CD4-positive, alpha-beta memory T cell (primary cell): ENCODE measurements at regions of chr1 and their contacts with region 1.

Region 1: GRCh38 chr1:110872745-110873720 is at the start of gene CD53:
- DNase-seq: peak; percentile 70 to 82 (median 73)
- H3K4me3 ChIP-seq: peak within 1 kb of the TSS; percentile 79 to 92
- H3K4me3 Mint-ChIP-seq: peak within 1 kb of the TSS; percentile 94 to 100 (median 98)
- H3K27ac ChIP-seq: peak within 1 kb of the TSS; percentile 88
- H3K27ac Mint-ChIP-seq: peak within 1 kb of the TSS; percentile 93 to 99 (median 98)
- H3K4me1 ChIP-seq: peaks cover 54% of the 10 kb centered on the region
- H3K4me1 Mint-ChIP-seq: peaks cover 43 to 79% (median 52%) of the 10 kb centered on the region in 4 donors
- H3K27me3 ChIP-seq: no peaks in the 10 kb centered on the region
- H3K27me3 Mint-ChIP-seq: no peaks in the 10 kb centered on the region
- total RNA-seq, gene CD53: 337 to 338 TPM

Region 2: GRCh38 chr1:110209715-110210603 is 663.1 kb before region 1 on chr1 and contains the start of gene KCNC4:
- CTCF ChIA-PET with region 1: no interaction called
- POLR2A ChIA-PET with region 1: no interaction called
- intact Hi-C with region 1: loop called (anchors 5 kb)
- DNase-seq: peak; percentile 91 to 95 (median 94)
- H3K4me3 ChIP-seq: peak within 1 kb of the TSS; percentile 36 to 68
- H3K4me3 Mint-ChIP-seq: peak within 1 kb of the TSS; percentile 87 to 95 (median 89)
- H3K27ac ChIP-seq: peak within 1 kb of the TSS; percentile 81
- H3K27ac Mint-ChIP-seq: peak within 1 kb of the TSS; percentile 89 to 98 (median 97)
- H3K4me1 ChIP-seq: peaks cover 44% of the 10 kb centered on the region
- H3K4me1 Mint-ChIP-seq: peaks cover 32 to 64% (median 45%) of the 10 kb centered on the region in 4 donors
- H3K27me3 ChIP-seq: no peaks in the 10 kb centered on the region
- H3K27me3 Mint-ChIP-seq: no peaks in the 10 kb centered on the region
- total RNA-seq, gene KCNC4: 11.9 to 13.4 TPM

Region 3: GRCh38 chr1:110674337-110675059 is 198.5 kb before region 1 on chr1 and contains the start of gene KCNA3:
- CTCF ChIA-PET with region 1: no interaction called
- POLR2A ChIA-PET with region 1: interaction called, 34 read pairs
- intact Hi-C with region 1: no loop called
- DNase-seq: peak; percentile 67 to 79 (median 69)
- H3K4me3 ChIP-seq: peak within 1 kb of the TSS; percentile 73 to 78
- H3K4me3 Mint-ChIP-seq: peak within 1 kb of the TSS; percentile 84 to 100 (median 100)
- H3K27ac ChIP-seq: peak within 1 kb of the TSS; percentile 91
- H3K27ac Mint-ChIP-seq: peak within 1 kb of the TSS; percentile 76 to 100 (median 99)
- H3K4me1 ChIP-seq: peaks cover 38% of the 10 kb centered on the region
- H3K4me1 Mint-ChIP-seq: peaks cover 28 to 79% (median 38%) of the 10 kb centered on the region in 4 donors
- H3K27me3 ChIP-seq: no peaks in the 10 kb centered on the region
- H3K27me3 Mint-ChIP-seq: no peaks in the 10 kb centered on the region
- total RNA-seq, gene KCNA3: 124 TPM

Region 4: DNA sequence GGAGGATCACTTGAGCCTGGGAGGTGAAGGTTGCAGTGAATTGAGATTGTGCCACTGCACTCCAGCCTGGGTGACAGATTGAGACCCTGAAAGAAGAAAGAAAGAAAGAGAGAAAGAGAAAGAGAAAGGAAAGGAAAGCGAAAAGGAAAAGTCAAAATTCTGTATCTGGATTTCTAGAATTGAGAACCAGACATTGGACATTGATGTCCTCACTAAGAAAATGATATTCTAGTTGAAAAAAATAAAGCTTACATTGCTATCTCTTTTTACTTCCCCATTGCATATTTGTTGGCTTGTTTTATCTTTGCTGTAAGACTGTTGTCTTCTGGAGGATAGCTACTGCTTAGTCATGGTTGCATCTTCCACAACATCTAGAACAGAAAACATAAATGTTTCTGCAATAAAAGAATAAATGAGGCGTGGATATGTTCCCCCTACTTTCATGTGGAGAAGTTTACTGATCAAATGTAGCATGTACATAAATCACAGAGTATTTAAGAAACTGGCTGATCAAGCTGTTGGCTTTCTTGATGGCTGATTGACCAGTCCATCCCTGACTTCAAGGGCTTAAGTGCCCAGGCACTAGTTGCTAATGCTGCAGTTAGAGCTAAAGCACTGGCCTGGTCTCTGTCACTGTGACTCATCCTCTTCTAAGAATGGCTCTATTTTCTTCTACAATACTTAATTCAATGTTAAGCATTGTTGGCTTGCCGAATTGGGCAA is 17.6 kb after region 1 on chr1:
- CTCF ChIA-PET with region 1: interaction called, 5 read pairs
- POLR2A ChIA-PET with region 1: interaction called, 17 read pairs
- intact Hi-C with region 1: loop called (anchors 1 kb)
- DNase-seq: no peak
- H3K4me3 ChIP-seq: no peak overlapping the region
- H3K4me3 Mint-ChIP-seq: peak overlapping the region in 7 of 8 donors; percentile 5 to 72 (median 56)
- H3K27ac ChIP-seq: no peak overlapping the region
- H3K27ac Mint-ChIP-seq: peak overlapping the region; percentile 36 to 89 (median 80)
- H3K4me1 ChIP-seq: peaks cover 90% of the 10 kb centered on the region
- H3K4me1 Mint-ChIP-seq: peaks cover 71 to 98% (median 87%) of the 10 kb centered on the region in 4 donors
- H3K27me3 ChIP-seq: no peaks in the 10 kb centered on the region
- H3K27me3 Mint-ChIP-seq: no peaks in the 10 kb centered on the region

Region 5: DNA sequence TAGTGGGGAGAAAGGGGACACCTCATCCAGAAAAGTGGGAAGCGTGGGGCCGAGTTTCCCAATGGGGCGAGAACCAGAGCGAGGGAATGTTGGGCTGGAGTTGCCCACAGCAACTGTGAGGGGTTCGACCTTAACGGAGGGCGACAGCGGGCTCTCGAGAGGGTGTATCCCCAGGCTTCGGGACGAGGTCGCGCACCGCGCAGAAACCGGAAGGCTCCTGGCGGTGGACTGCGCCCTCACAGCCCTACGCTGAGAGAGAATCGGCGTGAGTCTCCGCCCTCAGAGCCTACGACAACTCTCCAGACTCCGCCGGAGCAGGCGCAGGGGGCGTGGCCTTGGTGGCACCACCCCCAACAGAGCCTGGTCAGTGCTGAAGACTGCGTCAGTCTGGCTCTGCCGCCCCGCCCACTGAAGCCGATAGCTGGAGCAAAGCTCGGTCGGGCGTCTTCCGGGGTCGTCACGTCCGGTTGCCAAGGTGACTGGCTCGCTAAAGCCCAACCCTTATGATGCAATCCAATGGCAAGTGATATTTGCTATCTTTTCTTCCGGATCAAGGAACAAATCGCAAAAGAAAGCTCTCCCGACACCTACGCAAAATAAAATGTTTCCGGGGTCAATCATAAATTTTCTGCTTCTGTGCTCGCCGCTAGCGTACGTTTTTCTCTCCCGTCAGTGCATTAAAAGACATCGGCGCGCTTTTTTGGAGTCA is 90.8 kb after region 1 on chr1 and contains the start of gene LRIF1:
- CTCF ChIA-PET with region 1: interaction called, 6 read pairs
- POLR2A ChIA-PET with region 1: interaction called, 61 read pairs
- intact Hi-C with region 1: loop called (anchors 1 kb)
- DNase-seq: peak; percentile 98 to 100 (median 100)
- H3K4me3 ChIP-seq: peak within 1 kb of the TSS; percentile 90 to 95
- H3K4me3 Mint-ChIP-seq: peak within 1 kb of the TSS; percentile 81 to 96 (median 92)
- H3K27ac ChIP-seq: peak within 1 kb of the TSS; percentile 96
- H3K27ac Mint-ChIP-seq: peak within 1 kb of the TSS; percentile 93 to 100 (median 98)
- H3K4me1 ChIP-seq: peaks cover 31% of the 10 kb centered on the region
- H3K4me1 Mint-ChIP-seq: peaks cover 20 to 35% (median 27%) of the 10 kb centered on the region in 4 donors
- H3K27me3 ChIP-seq: peaks cover 3% of the 10 kb centered on the region
- H3K27me3 Mint-ChIP-seq: peaks cover 8 to 10% of the 10 kb centered on the region in 2 donors
- total RNA-seq, gene LRIF1: 27.0 to 28.2 TPM

Region 6: GRCh38 chr1:111603979-111604378 is 730.9 kb after region 1 on chr1:
- CTCF ChIA-PET with region 1: no interaction called
- POLR2A ChIA-PET with region 1: no interaction called
- intact Hi-C with region 1: loop called (anchors 5 kb)
- DNase-seq: peak; percentile 80 to 91 (median 85)
- H3K4me3 ChIP-seq: no peak overlapping the region
- H3K4me3 Mint-ChIP-seq: peak overlapping the region; percentile 26 to 89 (median 72)
- H3K27ac ChIP-seq: peak overlapping the region; percentile 27
- H3K27ac Mint-ChIP-seq: peak overlapping the region; percentile 85 to 97 (median 91)
- H3K4me1 ChIP-seq: peaks cover 78% of the 10 kb centered on the region
- H3K4me1 Mint-ChIP-seq: peaks cover 58 to 80% (median 73%) of the 10 kb centered on the region in 4 donors
- H3K27me3 ChIP-seq: no peaks in the 10 kb centered on the region
- H3K27me3 Mint-ChIP-seq: no peaks in the 10 kb centered on the region